ENCODE measurements at regions of chr12 and their contacts with region 1.

Region 1: DNA sequence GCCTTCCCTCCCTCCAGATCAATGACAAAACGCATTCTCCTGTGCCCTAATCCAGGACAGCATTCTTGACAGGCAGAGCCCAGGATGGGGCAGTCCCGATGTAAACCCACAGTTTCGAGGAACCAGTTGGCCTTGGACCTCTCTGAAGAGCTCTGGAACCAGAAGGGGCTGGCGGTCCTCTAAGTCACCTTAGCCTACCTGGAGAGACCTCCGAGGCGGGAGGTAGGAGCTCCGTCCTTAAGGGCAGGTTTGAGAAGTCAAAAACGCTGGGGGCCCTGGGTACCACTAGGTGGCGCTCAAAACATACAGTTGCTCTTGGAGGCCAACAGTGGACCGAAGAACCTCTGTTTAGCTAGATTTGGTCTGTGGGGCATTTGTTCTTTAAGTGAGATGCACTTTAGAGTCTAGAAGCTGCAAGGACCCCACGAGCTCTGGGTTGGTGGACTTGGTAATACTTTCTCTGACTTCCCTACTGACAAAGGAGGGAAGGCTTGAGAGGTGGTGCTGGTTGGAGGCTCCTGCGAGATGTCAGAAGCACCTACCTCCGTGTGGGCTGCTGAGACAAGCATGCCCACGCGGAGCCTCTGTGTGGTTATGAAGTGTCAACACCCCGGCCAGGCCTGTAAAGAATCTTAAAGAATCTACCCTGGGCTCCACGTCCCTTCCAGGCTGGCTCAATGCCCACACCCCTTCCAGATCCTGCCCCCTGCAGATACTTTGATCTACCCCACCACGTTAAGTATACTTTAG is 74.8 kb upstream of the CHST11 start:
- DNase-seq: peak; percentile 89
- ATAC-seq: peak; percentile 86
- H3K4me3 Mint-ChIP-seq: no peak overlapping the region
- H3K27ac Mint-ChIP-seq: no peak overlapping the region
- H3K4me1 Mint-ChIP-seq: peaks cover 7% of the 10 kb centered on the region
- H3K27me3 Mint-ChIP-seq: peaks cover 5% of the 10 kb centered on the region

Region 2: GRCh38 chr12:104569346-104570173 is 187.7 kb after region 1 on chr12:
- CTCF ChIA-PET with region 1: interaction called, 4 read pairs
- POLR2A ChIA-PET with region 1: no interaction called
- intact Hi-C with region 1: loop called in 1 of 2 experiments (anchors 10 kb)
- DNase-seq: peak; percentile 61
- ATAC-seq: peak; percentile 67
- H3K4me3 Mint-ChIP-seq: no peak overlapping the region
- H3K27ac Mint-ChIP-seq: peak overlapping the region; percentile 33
- H3K4me1 Mint-ChIP-seq: peaks cover 49% of the 10 kb centered on the region
- H3K27me3 Mint-ChIP-seq: no peaks in the 10 kb centered on the region

Region 3: DNA sequence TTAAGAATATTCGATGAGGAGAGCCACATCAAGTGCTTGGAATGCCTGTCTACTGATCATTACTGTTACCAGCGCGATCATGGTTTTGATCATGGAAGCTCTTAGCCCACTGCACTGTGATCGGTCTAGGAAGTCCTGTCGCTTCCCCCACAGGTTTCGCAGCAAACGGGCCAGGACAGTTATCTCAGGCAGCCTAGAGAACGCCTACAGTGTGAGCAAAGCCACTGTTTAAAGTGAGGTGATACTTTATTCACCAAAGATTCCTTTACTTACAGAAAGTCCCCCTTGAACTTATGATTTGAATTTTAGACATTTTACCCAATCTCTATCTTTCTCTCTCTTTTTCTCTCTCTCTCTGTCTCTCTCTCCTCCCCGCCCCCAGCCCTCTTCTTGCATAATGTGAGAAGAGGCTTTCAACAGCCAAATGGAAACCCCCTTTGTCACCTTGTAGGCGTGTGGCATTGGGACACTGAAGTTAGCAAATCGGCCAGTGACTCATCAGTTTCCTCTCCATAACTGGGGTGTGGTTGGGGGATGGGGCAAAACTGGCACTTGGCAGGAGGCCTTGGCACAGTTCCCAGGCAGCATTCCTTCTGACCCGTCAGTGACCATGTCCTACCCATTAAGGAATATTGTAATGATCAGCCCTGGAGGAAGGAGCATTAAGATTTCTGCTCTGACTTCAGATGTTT is 289.6 kb after region 1 on chr12:
- CTCF ChIA-PET with region 1: interaction called, 5 read pairs
- POLR2A ChIA-PET with region 1: no interaction called
- intact Hi-C with region 1: loop called (anchors 5 kb)
- DNase-seq: peak; percentile 95
- ATAC-seq: peak; percentile 84
- H3K4me3 Mint-ChIP-seq: peak overlapping the region; percentile 41
- H3K27ac Mint-ChIP-seq: peak overlapping the region; percentile 93
- H3K4me1 Mint-ChIP-seq: peaks cover 60% of the 10 kb centered on the region
- H3K27me3 Mint-ChIP-seq: no peaks in the 10 kb centered on the region

Region 4: GRCh38 chr12:104769144-104769561 is 387.2 kb after region 1 on chr12:
- CTCF ChIA-PET with region 1: interaction called, 10 read pairs
- POLR2A ChIA-PET with region 1: no interaction called
- intact Hi-C with region 1: no loop called
- DNase-seq: no peak
- ATAC-seq: no peak
- H3K4me3 Mint-ChIP-seq: no peak overlapping the region
- H3K27ac Mint-ChIP-seq: no peak overlapping the region
- H3K4me1 Mint-ChIP-seq: peaks cover 16% of the 10 kb centered on the region
- H3K27me3 Mint-ChIP-seq: no peaks in the 10 kb centered on the region

Region 5: DNA sequence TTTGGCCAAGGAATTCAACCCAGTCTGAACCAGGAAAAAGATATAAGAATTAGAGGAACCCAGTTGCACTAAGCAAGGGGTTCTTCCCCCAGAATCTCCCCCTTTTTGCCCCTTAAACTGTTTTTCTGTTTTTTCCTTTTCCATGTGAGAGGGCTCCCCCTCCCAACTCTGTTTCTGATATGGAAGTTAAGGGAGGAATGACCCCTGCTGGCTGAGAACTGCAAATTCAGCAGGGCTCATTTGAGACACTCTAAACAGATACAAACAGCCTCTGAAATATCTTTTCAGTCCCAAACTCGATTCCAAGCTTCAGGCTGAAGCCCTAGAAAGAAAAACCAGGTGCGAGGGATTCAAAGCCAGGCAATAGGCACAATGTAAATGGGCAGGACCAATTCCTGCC is 443.5 kb after region 1 on chr12:
- CTCF ChIA-PET with region 1: interaction called, 7 read pairs
- POLR2A ChIA-PET with region 1: no interaction called
- intact Hi-C with region 1: loop called (anchors 2 to 5 kb)
- DNase-seq: no peak
- ATAC-seq: no peak
- H3K4me3 Mint-ChIP-seq: no peak overlapping the region
- H3K27ac Mint-ChIP-seq: no peak overlapping the region
- H3K4me1 Mint-ChIP-seq: peaks cover 5% of the 10 kb centered on the region
- H3K27me3 Mint-ChIP-seq: no peaks in the 10 kb centered on the region

Region 6: DNA sequence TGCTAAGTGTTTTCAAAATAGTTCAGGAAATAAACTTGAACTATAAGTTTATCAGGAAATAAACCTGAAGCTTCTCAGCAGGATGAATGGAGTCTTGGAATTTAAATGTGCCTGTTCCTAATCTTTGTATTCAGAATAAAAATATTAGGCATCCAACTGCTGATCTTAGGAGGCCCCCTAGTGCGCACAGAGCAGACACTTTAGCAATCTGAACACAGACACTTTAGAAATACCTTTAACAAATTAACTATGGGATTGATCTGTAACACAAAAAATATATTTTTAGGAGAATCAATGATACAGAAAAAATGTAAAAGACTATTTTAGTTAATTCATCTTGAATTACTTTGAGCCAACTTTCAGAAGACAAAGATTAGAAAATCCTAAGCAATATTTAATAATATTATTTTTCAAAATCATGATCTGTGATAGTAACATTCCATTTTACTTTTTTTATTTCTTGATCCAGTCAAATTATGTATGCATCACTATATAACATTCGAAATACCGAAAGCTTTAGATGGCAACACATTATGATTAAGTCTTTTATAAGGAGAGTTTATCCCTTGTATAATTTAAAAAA is 495.3 kb after region 1 on chr12:
- CTCF ChIA-PET with region 1: interaction called, 13 read pairs
- POLR2A ChIA-PET with region 1: no interaction called
- intact Hi-C with region 1: loop called (anchors 1 kb)
- DNase-seq: peak; percentile 46
- ATAC-seq: peak; percentile 66
- H3K4me3 Mint-ChIP-seq: no peak overlapping the region
- H3K27ac Mint-ChIP-seq: no peak overlapping the region
- H3K4me1 Mint-ChIP-seq: no peaks in the 10 kb centered on the region
- H3K27me3 Mint-ChIP-seq: no peaks in the 10 kb centered on the region

Region 7: GRCh38 chr12:105053116-105053572 is 671.2 kb after region 1 on chr12:
- CTCF ChIA-PET with region 1: interaction called, 28 read pairs
- POLR2A ChIA-PET with region 1: no interaction called
- intact Hi-C with region 1: loop called (anchors 1 kb)
- DNase-seq: peak; percentile 85
- ATAC-seq: peak; percentile 85
- H3K4me3 Mint-ChIP-seq: no peak overlapping the region
- H3K27ac Mint-ChIP-seq: no peak overlapping the region
- H3K4me1 Mint-ChIP-seq: peaks cover 4% of the 10 kb centered on the region
- H3K27me3 Mint-ChIP-seq: peaks cover 4% of the 10 kb centered on the region

Measured in activated CD4-positive, alpha-beta T cell treated with anti-CD3 and anti-CD28 coated beads for 36 hours (primary cell).